ENCODE measurements at regions of chr17 and their contacts with region 1.

Region 1: GRCh38 chr17:74961657-74962490 is 10.7 kb downstream of the HID1 start:
- DNase-seq: peak; percentile 83
- H3K4me3 ChIP-seq: no peak overlapping the region
- H3K27ac ChIP-seq: no peak overlapping the region
- H3K4me1 ChIP-seq: no peaks in the 10 kb centered on the region
- H3K27me3 ChIP-seq: no peaks in the 10 kb centered on the region
- CTCF ChIP-seq: peak; percentile 62 to 74
- POLR2A ChIP-seq: no peak

Region 2: GRCh38 chr17:74394977-74395376 is 566.9 kb before region 1 on chr17:
- CTCF ChIA-PET with region 1: no interaction called
- POLR2A ChIA-PET with region 1: no interaction called
- dilution Hi-C with region 1: no loop called
- intact Hi-C with region 1: no loop called
- DNase-seq: no peak
- H3K4me3 ChIP-seq: no peak overlapping the region
- H3K27ac ChIP-seq: no peak overlapping the region
- H3K4me1 ChIP-seq: no peaks in the 10 kb centered on the region
- H3K27me3 ChIP-seq: no peaks in the 10 kb centered on the region
- CTCF ChIP-seq: no peak
- POLR2A ChIP-seq: no peak

Region 3: DNA sequence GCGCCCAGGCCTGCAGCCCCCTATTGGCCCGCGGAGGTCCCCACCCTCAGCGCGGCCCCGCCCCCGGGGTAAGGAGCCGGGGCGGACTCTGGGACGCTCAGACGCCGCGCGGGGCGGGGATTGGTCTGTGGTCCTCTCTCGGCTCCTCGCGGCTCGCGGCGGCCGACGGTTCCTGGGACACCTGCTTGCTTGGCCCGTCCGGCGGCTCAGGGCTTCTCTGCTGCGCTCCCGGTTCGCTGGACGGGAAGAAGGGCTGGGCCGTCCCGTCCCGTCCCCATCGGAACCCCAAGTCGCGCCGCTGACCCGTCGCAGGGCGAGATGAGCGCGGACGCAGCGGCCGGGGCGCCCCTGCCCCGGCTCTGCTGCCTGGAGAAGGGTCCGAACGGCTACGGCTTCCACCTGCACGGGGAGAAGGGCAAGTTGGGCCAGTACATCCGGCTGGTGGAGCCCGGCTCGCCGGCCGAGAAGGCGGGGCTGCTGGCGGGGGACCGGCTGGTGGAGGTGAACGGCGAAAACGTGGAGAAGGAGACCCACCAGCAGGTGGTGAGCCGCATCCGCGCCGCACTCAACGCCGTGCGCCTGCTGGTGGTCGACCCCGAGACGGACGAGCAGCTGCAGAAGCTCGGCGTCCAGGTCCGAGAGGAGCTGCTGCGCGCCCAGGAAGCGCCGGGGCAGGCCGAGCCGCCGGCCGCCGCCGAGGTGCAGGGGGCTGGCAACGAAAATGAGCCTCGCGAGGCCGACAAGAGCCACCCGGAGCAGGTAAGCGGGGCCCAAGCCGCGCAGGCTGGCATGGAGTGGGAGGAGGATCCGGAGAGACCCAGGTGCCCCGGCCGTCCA is 213.1 kb before region 1 on chr17 and contains the start of gene NHERF1:
- CTCF ChIA-PET with region 1: interaction called, 22 read pairs
- POLR2A ChIA-PET with region 1: no interaction called
- dilution Hi-C with region 1: no loop called
- intact Hi-C with region 1: loop called (anchors 2 kb)
- DNase-seq: no peak
- H3K4me3 ChIP-seq: peak within 1 kb of the TSS; percentile 47 to 71 (median 57)
- H3K27ac ChIP-seq: no peak within 1 kb of the TSS
- H3K4me1 ChIP-seq: peaks cover 4% of the 10 kb centered on the region
- H3K27me3 ChIP-seq: no peaks in the 10 kb centered on the region
- CTCF ChIP-seq: peak; percentile 13 to 46
- POLR2A ChIP-seq: peak; percentile 92
- total RNA-seq, gene NHERF1: 26.8 and 26.9 TPM in 2 replicates

Region 4: GRCh38 chr17:74950207-74950606 is 11.7 kb before region 1 on chr17:
- CTCF ChIA-PET with region 1: interaction called, 24 read pairs
- POLR2A ChIA-PET with region 1: no interaction called
- dilution Hi-C with region 1: no loop called
- intact Hi-C with region 1: no loop called
- DNase-seq: no peak
- H3K4me3 ChIP-seq: no peak overlapping the region
- H3K27ac ChIP-seq: no peak overlapping the region
- H3K4me1 ChIP-seq: no peaks in the 10 kb centered on the region
- H3K27me3 ChIP-seq: peaks cover 0 to 2% of the 10 kb centered on the region in 2 experiments
- CTCF ChIP-seq: no peak
- POLR2A ChIP-seq: no peak

Region 5: DNA sequence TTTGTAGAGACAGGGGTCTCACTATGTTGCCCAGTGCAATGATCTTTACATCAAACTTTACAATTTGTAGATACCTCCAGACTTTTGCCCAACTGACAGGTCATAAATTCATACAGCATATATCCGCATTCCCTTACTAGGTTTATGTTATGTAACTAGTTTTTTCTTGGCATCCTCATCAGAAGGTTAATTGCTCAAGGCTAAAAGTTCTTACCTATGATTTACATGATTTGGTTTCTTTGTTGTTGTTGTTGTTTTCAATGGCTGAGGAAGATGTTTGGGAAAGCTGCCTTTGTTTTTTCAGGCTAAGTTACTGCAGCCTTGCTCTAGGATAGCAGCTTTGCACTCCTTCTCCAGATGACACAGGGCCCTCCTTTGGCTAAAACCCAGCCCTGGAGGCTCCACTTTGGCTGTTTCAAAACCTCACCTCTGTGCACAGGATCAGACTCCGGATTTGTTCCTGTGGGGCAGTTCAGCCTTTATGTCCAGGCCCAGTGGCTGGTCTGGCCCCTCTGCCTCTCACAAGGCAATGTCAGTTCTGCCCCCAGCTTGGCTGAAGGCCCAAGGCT is 31.7 kb after region 1 on chr17:
- CTCF ChIA-PET with region 1: interaction called, 21 read pairs
- POLR2A ChIA-PET with region 1: interaction called, 6 read pairs
- dilution Hi-C with region 1: no loop called
- intact Hi-C with region 1: no loop called
- DNase-seq: no peak
- H3K4me3 ChIP-seq: no peak overlapping the region
- H3K27ac ChIP-seq: no peak overlapping the region
- H3K4me1 ChIP-seq: peaks cover 7% of the 10 kb centered on the region
- H3K27me3 ChIP-seq: no peaks in the 10 kb centered on the region
- CTCF ChIP-seq: no peak
- POLR2A ChIP-seq: no peak

Region 6: DNA sequence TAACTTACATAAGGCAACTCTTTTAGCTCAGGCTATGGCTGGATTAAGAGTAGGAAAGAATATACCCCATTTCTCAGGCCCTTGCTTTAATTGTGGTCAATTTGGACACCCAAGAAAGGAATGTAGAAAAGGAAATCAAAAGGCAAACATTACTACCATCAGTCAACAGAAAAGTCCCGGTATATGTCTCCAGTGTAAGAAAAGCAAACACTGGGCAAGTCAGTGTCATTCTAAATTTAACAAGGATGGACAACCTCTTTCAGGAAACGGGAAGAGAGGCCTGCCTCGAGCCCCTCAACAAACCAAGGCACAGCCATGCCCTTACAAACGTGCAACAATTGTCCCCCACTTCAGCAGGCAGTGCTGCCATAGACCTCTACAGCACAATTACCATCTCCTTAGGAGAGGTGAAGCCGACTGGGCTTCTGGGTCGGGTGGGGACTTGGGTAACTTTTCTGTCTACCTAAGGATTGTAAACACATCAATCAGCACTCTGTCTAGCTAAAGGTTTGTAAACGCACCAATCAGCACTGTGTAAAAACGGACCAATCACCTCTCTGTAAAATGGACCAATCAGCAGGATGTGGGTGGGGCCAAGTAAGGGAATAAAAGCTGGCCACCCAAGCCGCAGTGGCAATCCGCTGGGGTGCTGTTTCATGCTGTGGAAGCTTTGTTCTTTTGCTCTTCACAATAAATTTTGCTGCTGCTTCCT is 63.0 kb after region 1 on chr17:
- CTCF ChIA-PET with region 1: interaction called, 26 read pairs
- POLR2A ChIA-PET with region 1: no interaction called
- dilution Hi-C with region 1: no loop called
- intact Hi-C with region 1: no loop called
- DNase-seq: no peak
- H3K4me3 ChIP-seq: no peak overlapping the region
- H3K27ac ChIP-seq: no peak overlapping the region
- H3K4me1 ChIP-seq: no peaks in the 10 kb centered on the region
- H3K27me3 ChIP-seq: no peaks in the 10 kb centered on the region
- CTCF ChIP-seq: no peak
- POLR2A ChIP-seq: no peak

Region 7: DNA sequence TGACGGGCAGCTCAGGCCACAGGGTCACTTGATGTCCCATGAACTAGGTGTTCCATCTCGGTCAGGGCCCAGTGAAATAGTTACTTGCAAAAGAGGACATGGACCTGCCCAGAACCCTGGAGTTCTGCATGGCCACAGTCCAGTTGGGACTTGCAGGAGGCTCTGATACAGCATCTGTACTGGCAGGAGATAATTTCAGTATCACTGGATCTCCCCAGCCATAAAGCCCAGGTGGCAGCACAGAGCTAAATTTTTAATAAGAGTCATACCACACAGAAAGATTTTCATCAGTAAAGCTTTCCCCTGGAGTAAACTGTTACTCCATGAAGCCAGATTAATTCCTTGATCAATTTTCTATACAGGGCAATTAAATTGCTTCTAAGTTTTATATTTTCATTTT is 107.9 kb after region 1 on chr17:
- CTCF ChIA-PET with region 1: interaction called, 10 read pairs
- POLR2A ChIA-PET with region 1: no interaction called
- dilution Hi-C with region 1: no loop called
- intact Hi-C with region 1: no loop called
- DNase-seq: peak; percentile 45
- H3K4me3 ChIP-seq: no peak overlapping the region
- H3K27ac ChIP-seq: no peak overlapping the region
- H3K4me1 ChIP-seq: peaks cover 6% of the 10 kb centered on the region
- H3K27me3 ChIP-seq: no peaks in the 10 kb centered on the region
- CTCF ChIP-seq: peak in 1 of 2 donors; percentile 23
- POLR2A ChIP-seq: no peak

Region 8: DNA sequence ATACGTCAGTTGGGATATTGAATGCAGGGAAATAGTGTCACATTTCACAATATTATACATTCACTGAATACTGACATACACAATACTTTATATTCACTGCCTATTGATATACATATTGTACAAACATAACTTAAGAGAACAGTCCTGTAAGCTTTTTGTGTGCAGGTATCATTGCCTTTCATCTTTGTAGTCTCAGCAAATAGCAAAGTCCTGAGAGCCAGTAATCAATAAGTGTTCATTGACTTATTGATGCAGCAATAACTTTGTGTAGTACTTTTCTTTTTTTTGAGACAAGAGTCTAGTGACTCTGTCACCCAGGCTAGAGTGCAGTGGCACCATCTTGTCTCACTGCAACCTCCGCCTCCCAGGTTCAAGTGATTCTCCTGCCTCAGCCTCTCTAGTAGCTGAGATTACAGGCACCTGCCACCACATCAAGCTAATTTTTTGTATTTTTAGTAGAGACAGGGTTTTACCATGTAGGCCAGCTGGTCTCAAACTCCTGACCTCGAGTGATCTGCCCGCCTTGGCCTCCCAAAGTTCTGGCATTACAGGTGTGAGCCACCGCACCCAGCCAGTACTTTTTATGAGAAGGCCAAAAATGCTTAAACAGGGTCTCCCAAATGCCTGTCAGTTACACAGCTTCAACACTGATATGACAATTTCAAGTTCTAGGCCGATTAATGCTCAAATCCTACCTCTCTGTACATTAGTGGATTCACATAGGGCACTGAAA is 238.2 kb after region 1 on chr17:
- CTCF ChIA-PET with region 1: interaction called, 130 read pairs
- POLR2A ChIA-PET with region 1: interaction called, 3 read pairs
- dilution Hi-C with region 1: no loop called
- intact Hi-C with region 1: loop called (anchors 1 kb)
- DNase-seq: no peak
- H3K4me3 ChIP-seq: no peak overlapping the region
- H3K27ac ChIP-seq: no peak overlapping the region
- H3K4me1 ChIP-seq: no peaks in the 10 kb centered on the region
- H3K27me3 ChIP-seq: no peaks in the 10 kb centered on the region
- CTCF ChIP-seq: no peak
- POLR2A ChIP-seq: no peak